OCI-LY7 (cell line): ENCODE measurements at regions of chr2 and their contacts with region 1.

Region 1: GRCh38 chr2:12716282-12717190 is at the start of gene TRIB2:
- DNase-seq: peak; percentile 96
- H3K4me3 ChIP-seq: peak within 1 kb of the TSS; percentile 81
- H3K27ac ChIP-seq: peak within 1 kb of the TSS; percentile 45
- H3K4me1 ChIP-seq: peaks cover 40% of the 10 kb centered on the region
- CTCF ChIP-seq: peak; percentile 61
- total RNA-seq, gene TRIB2: 11.8 and 18.8 TPM in 2 replicates

Region 2: DNA sequence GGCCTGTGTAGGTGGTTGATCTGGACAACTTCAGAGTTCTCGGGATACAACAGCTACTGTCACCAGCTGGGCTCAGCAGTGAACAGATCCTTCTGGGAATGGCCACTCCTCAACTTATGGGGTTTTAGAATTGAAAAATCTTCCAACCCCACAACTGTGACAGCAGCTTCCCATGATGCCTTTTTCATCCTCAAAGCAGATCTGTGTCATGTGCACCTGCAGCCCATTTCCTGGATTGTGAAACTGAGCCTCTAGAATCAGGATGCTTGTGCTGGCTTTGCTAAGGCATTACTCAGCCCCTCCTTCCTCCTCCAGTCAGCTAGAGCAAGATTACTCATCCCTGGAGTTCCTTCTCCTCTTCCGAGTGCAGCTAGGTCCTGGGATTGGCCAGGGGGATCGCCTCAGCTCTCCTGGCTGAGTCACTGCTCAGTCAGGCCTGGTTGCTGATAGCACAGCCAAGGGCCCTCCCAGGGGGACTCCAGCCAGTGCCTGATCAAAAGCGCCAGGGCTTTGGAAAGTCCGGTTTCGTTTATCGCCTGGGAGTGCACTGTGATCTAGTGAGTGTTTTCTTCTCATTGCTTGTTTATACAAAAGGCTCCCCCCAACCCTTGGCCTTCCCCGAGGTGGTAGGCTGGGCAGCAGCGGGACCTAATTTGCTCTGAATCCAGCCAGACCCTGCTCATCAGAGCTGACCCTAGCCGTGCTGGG is 972.5 kb before region 1 on chr2:
- CTCF ChIA-PET with region 1: no interaction called
- POLR2A ChIA-PET with region 1: no interaction called
- intact Hi-C with region 1: loop called (anchors 5 kb)
- DNase-seq: peak; percentile 81
- H3K4me3 ChIP-seq: peak overlapping the region; percentile 51
- H3K27ac ChIP-seq: peak overlapping the region; percentile 31
- H3K4me1 ChIP-seq: peaks cover 52% of the 10 kb centered on the region
- CTCF ChIP-seq: no peak

Region 3: GRCh38 chr2:12032398-12032797 is 684.1 kb before region 1 on chr2:
- CTCF ChIA-PET with region 1: no interaction called
- POLR2A ChIA-PET with region 1: no interaction called
- intact Hi-C with region 1: loop called (anchors 5 kb)
- DNase-seq: peak; percentile 97
- H3K4me3 ChIP-seq: peak overlapping the region; percentile 45
- H3K27ac ChIP-seq: peak overlapping the region; percentile 98
- H3K4me1 ChIP-seq: peaks cover 88% of the 10 kb centered on the region
- CTCF ChIP-seq: peak; percentile 81

Region 4: DNA sequence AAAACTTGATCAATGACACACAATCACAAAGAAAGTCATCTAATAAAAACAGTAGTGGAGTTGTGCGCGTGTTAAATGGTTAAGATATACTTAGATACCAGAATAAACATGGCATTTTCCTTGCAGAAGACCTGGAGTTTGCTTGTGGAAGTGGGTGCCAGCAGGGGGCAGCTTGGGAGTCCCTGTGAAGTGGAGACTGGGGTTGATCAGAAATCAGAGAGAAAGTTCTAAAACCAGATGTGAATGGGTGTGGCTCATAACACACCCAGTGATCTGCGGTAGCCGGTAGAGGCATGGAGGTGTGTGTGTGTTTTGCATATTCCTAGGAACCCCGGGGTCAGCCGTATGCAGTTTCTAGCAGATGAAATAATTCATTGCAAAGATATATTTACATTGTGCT is 299.9 kb before region 1 on chr2:
- CTCF ChIA-PET with region 1: interaction called, 3 read pairs
- POLR2A ChIA-PET with region 1: no interaction called
- intact Hi-C with region 1: loop called (anchors 5 kb)
- DNase-seq: peak; percentile 7
- H3K4me3 ChIP-seq: no peak overlapping the region
- H3K27ac ChIP-seq: no peak overlapping the region
- H3K4me1 ChIP-seq: no peaks in the 10 kb centered on the region
- CTCF ChIP-seq: peak; percentile 60; the same call in 1 of the 2 replicates

Region 5: DNA sequence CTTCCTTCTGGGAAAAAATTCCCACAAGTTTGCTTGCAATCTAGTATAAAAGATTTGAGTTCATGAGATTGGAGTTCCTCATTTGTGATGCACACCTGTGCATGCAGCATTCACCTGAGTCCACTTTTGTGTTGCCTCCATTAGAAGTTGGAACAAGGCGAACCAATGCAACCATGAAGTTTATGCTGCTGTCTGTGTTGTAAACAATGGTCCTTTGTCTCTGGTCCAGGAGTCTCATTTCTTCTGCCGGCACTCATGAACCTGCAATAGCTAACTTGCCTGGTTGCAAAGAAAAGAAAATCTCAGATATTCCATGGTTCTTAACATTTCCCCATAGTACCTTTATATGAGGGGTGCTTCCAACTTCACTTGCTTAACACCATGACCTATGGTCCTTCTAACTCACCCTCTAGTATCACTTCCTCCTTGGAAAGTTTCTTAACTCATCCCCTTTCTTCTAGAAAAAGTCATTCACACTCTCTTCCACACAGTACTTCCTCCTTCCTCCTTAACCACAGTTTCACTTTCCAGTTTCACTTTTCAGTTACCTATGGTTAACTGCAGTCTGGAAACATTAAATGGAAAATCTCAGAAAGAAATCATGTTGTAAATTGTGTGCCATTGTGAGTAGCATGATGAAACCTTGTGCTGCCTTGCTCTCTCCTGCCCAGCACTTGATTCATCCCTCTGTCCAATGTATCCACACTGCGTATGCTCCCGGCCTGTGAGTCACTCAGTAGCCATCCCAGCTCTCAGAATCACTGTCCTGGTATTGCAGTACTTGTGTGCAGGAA is 128.6 kb before region 1 on chr2:
- CTCF ChIA-PET with region 1: no interaction called
- POLR2A ChIA-PET with region 1: interaction called, 4 read pairs
- intact Hi-C with region 1: loop called (anchors 2 kb)
- DNase-seq: peak; percentile 64
- H3K4me3 ChIP-seq: peak overlapping the region; percentile 11
- H3K27ac ChIP-seq: no peak overlapping the region
- H3K4me1 ChIP-seq: peaks cover 38% of the 10 kb centered on the region
- CTCF ChIP-seq: no peak

Region 6: GRCh38 chr2:12769492-12770105 is 53.1 kb after region 1 on chr2:
- CTCF ChIA-PET with region 1: no interaction called
- POLR2A ChIA-PET with region 1: no interaction called
- intact Hi-C with region 1: no loop called
- DNase-seq: no peak
- H3K4me3 ChIP-seq: no peak overlapping the region
- H3K27ac ChIP-seq: no peak overlapping the region
- H3K4me1 ChIP-seq: no peaks in the 10 kb centered on the region
- CTCF ChIP-seq: no peak

Region 7: GRCh38 chr2:12931186-12931844 is 214.8 kb after region 1 on chr2:
- CTCF ChIA-PET with region 1: no interaction called
- POLR2A ChIA-PET with region 1: interaction called, 3 read pairs
- intact Hi-C with region 1: loop called (anchors 2 kb)
- DNase-seq: peak; percentile 23
- H3K4me3 ChIP-seq: no peak overlapping the region
- H3K27ac ChIP-seq: no peak overlapping the region
- H3K4me1 ChIP-seq: peaks cover 22% of the 10 kb centered on the region
- CTCF ChIP-seq: peak; percentile 88